Naive thymus-derived CD4-positive, alpha-beta T cell (primary cell): ENCODE measurements at regions of chr2 and their contacts with region 1.

Region 1: GRCh38 chr2:35410431-35411061 is 945.0 kb upstream of the CRIM1 start:
- DNase-seq: peak in 5 of 9 donors; percentile 4 to 47 (median 5)
- ATAC-seq: no peak
- H3K4me3 ChIP-seq: no peak overlapping the region
- H3K4me3 Mint-ChIP-seq: no peak overlapping the region
- H3K27ac ChIP-seq: no peak overlapping the region
- H3K27ac Mint-ChIP-seq: no peak overlapping the region
- H3K4me1 ChIP-seq: no peaks in the 10 kb centered on the region
- H3K4me1 Mint-ChIP-seq: no peaks in the 10 kb centered on the region
- H3K27me3 ChIP-seq: no peaks in the 10 kb centered on the region
- H3K27me3 Mint-ChIP-seq: peaks cover 0 to 7% (median 0%) of the 10 kb centered on the region in 5 donors

Region 2: GRCh38 chr2:33673937-33674336 is 1736.6 kb before region 1 on chr2:
- CTCF ChIA-PET with region 1: no interaction called
- POLR2A ChIA-PET with region 1: no interaction called
- intact Hi-C with region 1: loop called in 1 of 2 experiments (anchors 5 kb)
- DNase-seq: no peak
- ATAC-seq: no peak
- H3K4me3 ChIP-seq: no peak overlapping the region
- H3K4me3 Mint-ChIP-seq: no peak overlapping the region
- H3K27ac ChIP-seq: no peak overlapping the region
- H3K27ac Mint-ChIP-seq: no peak overlapping the region
- H3K4me1 ChIP-seq: no peaks in the 10 kb centered on the region
- H3K4me1 Mint-ChIP-seq: no peaks in the 10 kb centered on the region
- H3K27me3 ChIP-seq: no peaks in the 10 kb centered on the region
- H3K27me3 Mint-ChIP-seq: peaks cover 0 to 18% (median 12%) of the 10 kb centered on the region in 5 donors

Region 3: DNA sequence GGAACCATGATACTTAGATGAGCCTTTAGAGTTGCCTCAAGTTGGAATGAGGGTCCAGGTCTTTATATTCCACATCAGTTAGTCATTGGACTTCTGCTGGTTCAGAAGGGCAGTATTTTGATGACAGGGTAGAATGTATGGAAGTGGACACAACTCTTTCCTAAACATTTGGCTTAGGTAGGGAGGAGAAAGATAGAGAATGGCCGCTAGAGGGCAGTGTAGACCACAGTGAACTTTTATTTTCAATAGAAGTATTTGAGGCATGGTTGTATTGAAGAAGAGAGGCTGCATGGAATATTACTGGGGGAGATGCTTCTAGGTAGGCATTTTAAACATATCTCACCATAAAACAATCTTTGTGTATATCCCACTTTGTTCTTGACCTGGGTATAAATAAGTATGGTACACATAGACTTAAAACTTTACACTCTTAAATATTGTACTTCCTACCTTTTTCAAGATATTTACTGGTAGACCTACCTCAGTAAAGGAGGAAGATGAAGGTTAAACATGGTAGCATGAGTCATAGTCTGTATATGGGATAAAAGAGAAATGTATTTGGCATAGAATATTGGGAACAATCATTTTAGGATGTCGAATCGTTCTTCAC is 1313.9 kb before region 1 on chr2:
- CTCF ChIA-PET with region 1: no interaction called
- POLR2A ChIA-PET with region 1: no interaction called
- intact Hi-C with region 1: loop called in 1 of 2 experiments (anchors 1 kb)
- DNase-seq: peak in 6 of 9 donors; percentile 7 to 37 (median 21)
- ATAC-seq: peak; percentile 57
- H3K4me3 ChIP-seq: no peak overlapping the region
- H3K4me3 Mint-ChIP-seq: no peak overlapping the region
- H3K27ac ChIP-seq: no peak overlapping the region
- H3K27ac Mint-ChIP-seq: no peak overlapping the region
- H3K4me1 ChIP-seq: no peaks in the 10 kb centered on the region
- H3K4me1 Mint-ChIP-seq: no peaks in the 10 kb centered on the region
- H3K27me3 ChIP-seq: no peaks in the 10 kb centered on the region
- H3K27me3 Mint-ChIP-seq: peaks cover 0 to 17% (median 4%) of the 10 kb centered on the region in 5 donors

Region 4: GRCh38 chr2:34912084-34912483 is 498.5 kb before region 1 on chr2:
- CTCF ChIA-PET with region 1: no interaction called
- POLR2A ChIA-PET with region 1: no interaction called
- intact Hi-C with region 1: no loop called
- DNase-seq: no peak
- ATAC-seq: no peak
- H3K4me3 ChIP-seq: no peak overlapping the region
- H3K4me3 Mint-ChIP-seq: no peak overlapping the region
- H3K27ac ChIP-seq: no peak overlapping the region
- H3K27ac Mint-ChIP-seq: no peak overlapping the region
- H3K4me1 ChIP-seq: no peaks in the 10 kb centered on the region
- H3K4me1 Mint-ChIP-seq: no peaks in the 10 kb centered on the region
- H3K27me3 ChIP-seq: no peaks in the 10 kb centered on the region
- H3K27me3 Mint-ChIP-seq: no peaks in the 10 kb centered on the region